PC-3 (cell line): ENCODE measurements at regions of chr14 and their contacts with region 1.

Region 1: DNA sequence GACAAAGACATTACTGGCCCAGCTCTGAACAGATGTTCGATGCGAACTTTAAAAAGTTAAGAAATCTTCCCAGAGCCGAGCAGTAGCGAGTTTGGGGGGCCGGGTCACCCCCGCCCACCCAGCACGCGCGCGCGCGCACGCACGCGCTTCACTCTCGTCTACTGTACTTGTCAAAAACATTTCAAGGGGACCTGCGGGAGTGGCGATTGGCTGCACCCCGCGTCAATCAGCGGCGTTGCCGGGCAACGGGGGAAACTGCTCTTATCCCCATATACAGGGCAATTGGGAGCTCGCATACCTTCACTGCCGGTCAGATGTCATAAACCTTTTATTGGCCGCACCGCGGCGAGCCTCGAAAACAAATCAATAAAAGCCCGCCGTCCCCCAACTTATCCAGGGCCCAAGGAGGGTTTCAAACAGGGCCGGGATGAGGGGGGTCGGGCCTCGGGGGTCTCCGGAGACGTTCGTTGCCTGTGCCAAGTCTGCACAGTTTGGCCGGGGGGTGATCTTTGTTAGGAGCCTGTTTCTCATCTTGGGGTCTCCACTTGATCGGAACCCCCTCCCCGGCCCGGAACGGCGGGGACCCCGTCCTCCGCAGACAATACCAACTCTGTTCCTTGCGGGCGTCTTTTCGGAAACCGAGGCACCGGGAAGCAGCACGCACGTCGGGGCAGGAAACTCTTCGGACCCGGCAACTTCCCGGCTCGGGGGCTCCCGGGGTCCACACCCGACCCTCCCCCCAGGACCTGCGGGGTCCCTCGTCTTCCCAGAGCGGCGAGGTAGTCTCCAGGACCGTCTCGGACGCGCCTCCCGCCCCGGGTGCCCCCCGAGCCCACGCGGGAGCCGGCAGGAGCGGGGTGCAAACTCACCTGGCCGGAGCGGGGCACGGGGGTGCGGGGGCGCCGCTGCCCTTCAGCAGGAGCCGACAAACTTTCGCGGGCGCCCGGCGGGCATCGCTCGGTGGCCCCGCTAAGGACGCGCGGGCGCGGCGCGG is 734 bp downstream of the FOXN3 start:
- DNase-seq: peak; percentile 98
- ATAC-seq: peak; percentile 72
- H3K4me3 ChIP-seq: peak overlapping the region; percentile 95
- H3K27ac ChIP-seq: no peak overlapping the region
- H3K4me1 ChIP-seq: peaks cover 28% of the 10 kb centered on the region
- H3K27me3 ChIP-seq: no peaks in the 10 kb centered on the region
- CTCF ChIP-seq: no peak

Region 2: DNA sequence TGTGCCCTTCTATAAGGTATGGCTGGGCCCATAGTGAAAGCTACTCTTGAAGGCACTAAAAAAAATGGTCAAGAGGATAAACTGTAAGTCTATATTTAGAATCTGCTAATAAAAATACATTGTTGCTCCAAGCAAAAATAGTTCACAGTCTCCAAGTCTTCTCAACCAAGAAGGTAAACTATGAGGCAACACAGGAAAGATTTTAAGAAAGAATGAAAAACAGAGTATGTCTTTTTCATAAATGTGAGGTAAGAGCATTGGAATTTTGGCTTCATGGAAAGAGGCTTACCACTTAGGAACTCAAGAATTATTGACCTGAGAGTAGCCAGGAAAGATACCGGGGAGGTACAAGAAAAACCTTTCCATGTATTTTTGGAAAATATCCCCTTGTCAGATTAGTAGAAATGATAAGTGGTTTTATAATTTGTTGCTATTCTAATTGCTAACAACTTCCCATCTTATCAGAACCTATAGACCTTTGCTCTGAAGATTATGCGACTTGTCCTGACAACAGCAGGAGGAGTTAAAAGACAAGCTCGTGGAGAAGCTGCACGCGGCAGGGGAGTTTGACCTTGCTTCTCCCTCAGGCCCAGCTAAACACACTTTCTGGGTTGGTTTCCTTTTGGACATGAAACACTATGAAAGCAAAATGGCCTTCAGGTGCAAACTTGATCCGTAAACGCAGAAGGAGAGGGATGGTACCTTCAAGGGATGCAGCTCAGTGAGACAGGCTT is 237.3 kb before region 1 on chr14:
- CTCF ChIA-PET with region 1: no interaction called
- POLR2A ChIA-PET with region 1: no interaction called
- intact Hi-C with region 1: loop called (anchors 5 kb)
- DNase-seq: peak; percentile 7
- ATAC-seq: no peak
- H3K4me3 ChIP-seq: no peak overlapping the region
- H3K27ac ChIP-seq: no peak overlapping the region
- H3K4me1 ChIP-seq: no peaks in the 10 kb centered on the region
- H3K27me3 ChIP-seq: no peaks in the 10 kb centered on the region
- CTCF ChIP-seq: no peak

Region 3: DNA sequence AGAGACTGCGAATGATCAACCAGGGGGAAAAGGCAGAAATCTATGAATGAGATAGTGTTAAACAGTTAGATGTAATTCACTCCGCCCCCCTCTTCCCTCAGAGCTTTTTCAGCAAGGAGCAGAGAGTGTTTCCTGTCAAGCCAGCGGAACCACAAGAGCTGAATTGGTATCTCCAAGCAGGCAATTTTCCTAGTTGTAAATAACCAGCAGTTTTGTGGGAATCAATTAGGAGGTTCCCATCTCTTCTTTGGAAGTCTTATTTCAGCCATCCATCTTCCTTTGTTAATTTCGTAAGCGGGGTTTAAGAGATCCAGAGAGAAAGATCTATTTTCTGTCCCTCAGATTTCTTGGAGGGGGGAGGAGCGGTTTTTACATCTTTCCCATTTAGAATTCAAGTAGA is 177.3 kb before region 1 on chr14:
- CTCF ChIA-PET with region 1: no interaction called
- POLR2A ChIA-PET with region 1: no interaction called
- intact Hi-C with region 1: no loop called
- DNase-seq: no peak
- ATAC-seq: no peak
- H3K4me3 ChIP-seq: no peak overlapping the region
- H3K27ac ChIP-seq: no peak overlapping the region
- H3K4me1 ChIP-seq: peaks cover 4% of the 10 kb centered on the region; the same call in 1 of the 2 replicates
- H3K27me3 ChIP-seq: no peaks in the 10 kb centered on the region
- CTCF ChIP-seq: no peak

Region 4: DNA sequence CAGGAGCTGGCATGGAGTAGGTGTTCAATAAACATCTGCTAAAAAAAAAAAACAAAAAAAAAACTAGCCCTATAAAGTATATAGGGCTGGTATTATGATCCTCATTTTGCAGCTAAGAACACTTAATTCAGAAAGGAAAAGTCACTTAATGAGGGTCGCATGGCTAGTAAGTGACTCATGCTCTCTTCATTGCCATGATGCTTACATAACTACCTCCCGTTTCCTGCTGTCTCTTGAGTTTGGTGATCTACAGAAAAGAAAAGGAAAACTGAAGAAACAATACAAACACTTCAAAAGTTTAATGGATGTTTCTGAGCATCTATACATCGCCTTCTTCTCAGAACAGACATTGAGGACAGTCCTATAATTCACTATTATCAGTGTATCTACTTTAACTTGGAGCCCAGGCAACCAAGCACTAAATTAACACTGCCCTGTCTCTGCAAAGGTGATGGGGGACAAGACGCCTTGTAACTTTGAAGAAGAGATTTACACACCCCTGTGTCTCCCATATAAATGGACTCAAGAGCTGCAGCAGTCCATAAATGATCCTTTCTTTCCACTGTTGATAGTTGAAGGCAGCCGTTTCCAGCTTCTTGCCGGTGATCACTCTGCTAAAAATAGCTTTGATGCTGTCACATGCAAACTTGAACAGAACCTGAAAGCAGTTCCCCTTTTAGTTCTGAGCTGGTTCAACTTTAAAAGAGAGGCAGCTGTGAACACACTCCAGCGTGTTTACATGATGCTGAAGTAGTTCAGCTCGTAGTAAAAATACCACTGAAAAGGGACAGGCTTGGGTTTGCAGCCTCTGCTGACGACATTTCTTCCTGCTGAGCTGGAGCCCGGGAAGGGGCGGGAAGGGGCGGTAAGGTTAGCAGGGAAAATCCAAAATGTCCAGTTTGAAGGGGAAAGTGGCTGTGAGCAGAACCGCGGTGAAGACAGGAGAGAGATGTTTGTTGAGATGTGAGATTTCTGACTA is 112.6 kb before region 1 on chr14:
- CTCF ChIA-PET with region 1: no interaction called
- POLR2A ChIA-PET with region 1: no interaction called
- intact Hi-C with region 1: loop called (anchors 1 kb)
- DNase-seq: peak; percentile 64
- ATAC-seq: peak; percentile 50
- H3K4me3 ChIP-seq: peak overlapping the region; percentile 44
- H3K27ac ChIP-seq: peak overlapping the region; percentile 93
- H3K4me1 ChIP-seq: peaks cover 38% of the 10 kb centered on the region
- H3K27me3 ChIP-seq: no peaks in the 10 kb centered on the region
- CTCF ChIP-seq: no peak

Region 5: GRCh38 chr14:89572596-89573398 is 156.5 kb after region 1 on chr14:
- CTCF ChIA-PET with region 1: no interaction called
- POLR2A ChIA-PET with region 1: no interaction called
- intact Hi-C with region 1: loop called (anchors 5 kb)
- DNase-seq: peak; percentile 2
- ATAC-seq: peak; percentile 58
- H3K4me3 ChIP-seq: no peak overlapping the region
- H3K27ac ChIP-seq: no peak overlapping the region
- H3K4me1 ChIP-seq: peaks cover 12% of the 10 kb centered on the region; the same call in 1 of the 2 replicates
- H3K27me3 ChIP-seq: no peaks in the 10 kb centered on the region
- CTCF ChIP-seq: no peak

Region 6: DNA sequence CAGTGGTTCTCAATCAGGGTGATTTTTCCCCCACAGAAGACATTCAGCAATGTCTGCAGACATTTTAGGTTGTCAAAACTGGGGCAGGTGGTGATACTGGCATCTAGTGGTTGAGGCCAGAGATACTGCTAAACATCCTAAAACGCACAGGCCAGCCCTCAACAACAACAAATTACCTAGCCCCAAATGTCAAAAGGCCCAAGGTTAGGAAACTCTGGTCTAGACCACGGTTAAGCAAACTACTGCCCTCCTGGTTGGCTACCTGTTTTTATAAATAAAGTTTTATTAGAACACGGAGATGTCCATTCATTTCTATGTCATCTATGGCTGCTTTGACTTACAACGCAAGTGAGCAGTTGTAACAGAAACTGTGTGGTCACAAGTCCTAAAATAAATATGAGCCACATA is 351.6 kb after region 1 on chr14:
- CTCF ChIA-PET with region 1: no interaction called
- POLR2A ChIA-PET with region 1: no interaction called
- intact Hi-C with region 1: loop called (anchors 5 kb)
- DNase-seq: peak; percentile 67
- ATAC-seq: peak; percentile 68
- H3K4me3 ChIP-seq: no peak overlapping the region
- H3K27ac ChIP-seq: no peak overlapping the region
- H3K4me1 ChIP-seq: peaks cover 5% of the 10 kb centered on the region; the same call in 1 of the 2 replicates
- H3K27me3 ChIP-seq: no peaks in the 10 kb centered on the region
- CTCF ChIP-seq: peak; percentile 79

Region 7: GRCh38 chr14:89915114-89915878 is 499.0 kb after region 1 on chr14:
- CTCF ChIA-PET with region 1: no interaction called
- POLR2A ChIA-PET with region 1: no interaction called
- intact Hi-C with region 1: loop called (anchors 5 kb)
- DNase-seq: peak; percentile 86
- ATAC-seq: no peak
- H3K4me3 ChIP-seq: no peak overlapping the region
- H3K27ac ChIP-seq: peak overlapping the region; percentile 81; the same call in 1 of the 2 replicates
- H3K4me1 ChIP-seq: peaks cover 45% of the 10 kb centered on the region
- H3K27me3 ChIP-seq: no peaks in the 10 kb centered on the region
- CTCF ChIP-seq: peak; percentile 92